Calu3 (cell line): ENCODE measurements at regions of chr15 and their contacts with region 1.

Region 1: DNA sequence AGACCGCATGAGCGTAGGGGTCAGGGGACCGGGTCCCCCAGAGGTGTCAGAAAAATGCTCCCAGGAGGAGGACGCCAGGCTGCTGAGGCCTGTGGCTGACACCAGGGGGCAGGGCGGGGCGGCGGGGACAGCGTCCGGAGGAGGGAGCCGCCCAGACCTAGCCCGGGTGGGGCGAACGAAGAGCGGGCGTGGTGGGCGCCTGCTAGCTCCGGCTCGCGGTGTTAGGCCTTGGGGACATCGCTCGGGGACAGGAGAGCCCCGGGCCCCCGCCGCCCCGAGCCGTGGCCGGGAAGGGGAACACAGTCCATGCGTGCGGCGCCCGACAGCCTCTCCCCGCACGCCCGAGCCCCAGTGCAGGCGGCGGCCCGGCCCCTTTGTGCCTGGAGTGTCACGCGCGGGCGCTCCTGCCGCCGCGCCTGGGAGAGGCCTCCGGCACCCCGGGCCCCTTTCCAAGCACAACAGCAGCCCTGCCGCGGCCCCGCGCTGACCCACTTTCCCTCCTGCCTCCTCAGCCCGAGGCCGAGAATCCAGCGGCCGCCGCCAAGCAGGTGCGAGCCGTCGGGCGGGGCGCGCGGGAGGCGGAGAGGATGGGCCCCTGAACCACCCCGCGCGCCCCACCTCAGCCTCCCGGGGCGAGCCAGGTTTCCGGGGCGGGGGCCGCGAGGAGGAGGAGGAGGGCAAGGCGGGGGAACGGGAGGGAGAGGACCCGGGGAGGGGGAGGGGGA is 111.0 kb upstream of the KLF13 start:
- DNase-seq: peak; percentile 70
- H3K4me3 Mint-ChIP-seq: peak overlapping the region; percentile 63
- H3K27ac Mint-ChIP-seq: no peak overlapping the region
- H3K4me1 Mint-ChIP-seq: no peaks in the 10 kb centered on the region
- H3K27me3 Mint-ChIP-seq: no peaks in the 10 kb centered on the region
- CTCF ChIP-seq: peak; percentile 33

Region 2: DNA sequence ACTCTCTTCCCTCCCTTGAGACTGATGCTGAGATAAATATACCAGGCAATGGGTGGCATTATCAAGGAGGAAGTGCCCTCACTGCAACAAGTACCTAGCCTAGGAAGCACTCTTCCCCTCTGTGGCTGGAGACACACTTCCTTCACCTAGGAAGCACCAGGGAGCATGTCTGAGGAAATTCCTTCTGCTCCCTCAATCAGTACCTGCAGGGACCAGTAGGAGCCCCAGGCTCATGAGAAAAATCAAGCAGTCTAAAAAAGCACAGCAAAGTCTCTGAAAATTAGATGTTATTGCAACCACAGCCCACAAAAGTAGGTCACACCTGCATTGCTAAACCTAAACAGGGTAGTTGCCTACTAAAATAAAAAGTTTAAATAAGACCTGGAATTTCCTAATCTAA is 36.0 kb before region 1 on chr15:
- CTCF ChIA-PET with region 1: no interaction called
- intact Hi-C with region 1: no loop called
- DNase-seq: no peak
- H3K4me3 Mint-ChIP-seq: no peak overlapping the region
- H3K27ac Mint-ChIP-seq: no peak overlapping the region
- H3K4me1 Mint-ChIP-seq: no peaks in the 10 kb centered on the region
- H3K27me3 Mint-ChIP-seq: no peaks in the 10 kb centered on the region
- CTCF ChIP-seq: no peak

Region 3: GRCh38 chr15:31326156-31326732 is 110.6 kb after region 1 on chr15:
- CTCF ChIA-PET with region 1: interaction called, 3 read pairs
- intact Hi-C with region 1: loop called (anchors 10 kb)
- DNase-seq: peak; percentile 88
- H3K4me3 Mint-ChIP-seq: peak overlapping the region; percentile 70
- H3K27ac Mint-ChIP-seq: no peak overlapping the region
- H3K4me1 Mint-ChIP-seq: no peaks in the 10 kb centered on the region
- H3K27me3 Mint-ChIP-seq: no peaks in the 10 kb centered on the region
- CTCF ChIP-seq: no peak

Region 4: GRCh38 chr15:31365655-31366127 is 150.0 kb after region 1 on chr15:
- CTCF ChIA-PET with region 1: no interaction called
- intact Hi-C with region 1: no loop called
- DNase-seq: no peak
- H3K4me3 Mint-ChIP-seq: no peak overlapping the region
- H3K27ac Mint-ChIP-seq: no peak overlapping the region
- H3K4me1 Mint-ChIP-seq: no peaks in the 10 kb centered on the region
- H3K27me3 Mint-ChIP-seq: no peaks in the 10 kb centered on the region
- CTCF ChIP-seq: no peak

Region 5: DNA sequence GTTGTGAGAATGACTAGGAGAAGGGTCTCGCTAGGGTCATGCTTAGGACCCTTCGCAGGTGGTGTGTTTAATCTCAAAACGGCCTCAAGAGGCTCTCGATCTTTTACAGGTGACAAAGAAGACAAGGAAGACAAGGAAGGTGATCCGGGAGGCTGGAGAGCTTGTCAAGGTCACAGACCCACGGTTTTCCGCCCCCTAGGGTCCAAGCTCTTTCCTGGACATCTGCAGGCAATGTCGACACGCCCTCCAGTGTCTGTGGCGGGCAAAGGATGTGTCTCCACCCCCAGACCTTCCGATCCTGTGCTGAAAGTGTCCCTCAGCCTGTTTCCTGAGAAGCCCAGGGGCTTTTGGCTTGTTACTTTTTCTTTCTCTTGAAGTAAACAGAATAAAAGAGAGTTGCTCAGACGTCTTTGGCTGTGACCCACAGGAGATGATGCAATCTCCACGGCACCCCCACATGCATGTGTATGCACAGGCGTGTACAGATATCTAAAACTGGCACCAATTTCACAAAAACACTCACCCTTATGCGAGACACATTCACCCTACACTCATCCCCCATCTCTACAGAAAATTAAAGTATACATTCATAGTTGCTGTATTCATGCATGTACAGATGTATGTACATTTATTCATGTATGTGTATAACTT is 219.7 kb after region 1 on chr15:
- CTCF ChIA-PET with region 1: interaction called, 6 read pairs
- intact Hi-C with region 1: loop called (anchors 5 kb)
- DNase-seq: peak; percentile 25
- H3K4me3 Mint-ChIP-seq: no peak overlapping the region
- H3K27ac Mint-ChIP-seq: no peak overlapping the region
- H3K4me1 Mint-ChIP-seq: no peaks in the 10 kb centered on the region
- H3K27me3 Mint-ChIP-seq: no peaks in the 10 kb centered on the region
- CTCF ChIP-seq: no peak

Region 6: GRCh38 chr15:31488426-31489204 is 273.0 kb after region 1 on chr15:
- CTCF ChIA-PET with region 1: interaction called, 12 read pairs
- intact Hi-C with region 1: no loop called
- DNase-seq: peak; percentile 45
- H3K4me3 Mint-ChIP-seq: no peak overlapping the region
- H3K27ac Mint-ChIP-seq: no peak overlapping the region
- H3K4me1 Mint-ChIP-seq: no peaks in the 10 kb centered on the region
- H3K27me3 Mint-ChIP-seq: no peaks in the 10 kb centered on the region
- CTCF ChIP-seq: peak; percentile 20